T-cell (primary cell): ENCODE measurements at regions of chr15 and their contacts with region 1.

Region 1: GRCh38 chr15:38631126-38632075 is 66.8 kb upstream of the RASGRP1 start:
- DNase-seq: no peak
- ATAC-seq: peak in 3 of 4 experiments; percentile 35 to 67 (median 38)
- H3K4me3 ChIP-seq: no peak overlapping the region
- H3K4me3 Mint-ChIP-seq: peak overlapping the region in 1 of 3 donors; percentile 57
- H3K27ac ChIP-seq: peak overlapping the region; percentile 45
- H3K27ac Mint-ChIP-seq: peak overlapping the region; percentile 80 to 83
- H3K4me1 ChIP-seq: peaks cover 16 to 24% of the 10 kb centered on the region in 2 experiments
- H3K4me1 Mint-ChIP-seq: peaks cover 24 to 34% (median 28%) of the 10 kb centered on the region in 3 donors
- H3K27me3 ChIP-seq: no peaks in the 10 kb centered on the region
- H3K27me3 Mint-ChIP-seq: no peaks in the 10 kb centered on the region

Region 2: GRCh38 chr15:37758412-37758811 is 873.0 kb before region 1 on chr15:
- CTCF ChIA-PET with region 1: no interaction called
- POLR2A ChIA-PET with region 1: no interaction called
- DNase-seq: no peak
- ATAC-seq: no peak
- H3K4me3 ChIP-seq: no peak overlapping the region
- H3K4me3 Mint-ChIP-seq: no peak overlapping the region
- H3K27ac ChIP-seq: no peak overlapping the region
- H3K27ac Mint-ChIP-seq: no peak overlapping the region
- H3K4me1 ChIP-seq: no peaks in the 10 kb centered on the region
- H3K4me1 Mint-ChIP-seq: no peaks in the 10 kb centered on the region
- H3K27me3 ChIP-seq: no peaks in the 10 kb centered on the region
- H3K27me3 Mint-ChIP-seq: peaks cover 2 to 5% of the 10 kb centered on the region in 2 donors

Region 3: DNA sequence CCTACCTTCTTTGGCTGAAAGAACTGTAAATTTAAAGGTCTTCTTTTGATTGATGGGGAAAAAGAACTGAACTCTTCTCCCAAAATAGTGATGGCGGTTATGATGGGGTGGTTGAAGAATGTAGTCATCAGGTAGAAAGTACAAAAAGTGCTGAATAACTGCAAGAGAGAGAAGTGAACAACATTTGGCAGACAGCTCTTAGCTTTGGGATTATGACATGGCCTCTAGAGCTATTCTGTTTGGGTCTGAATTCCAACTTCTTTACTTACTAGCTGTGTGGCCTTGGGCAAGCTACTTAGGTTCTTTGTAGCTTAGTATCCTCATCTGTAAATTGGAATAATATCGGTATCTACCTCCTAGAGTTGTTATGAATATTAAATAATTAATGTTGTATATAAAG is 287.1 kb before region 1 on chr15:
- CTCF ChIA-PET with region 1: no interaction called
- POLR2A ChIA-PET with region 1: interaction called in 1 of 2 experiments, 13 read pairs
- DNase-seq: no peak
- ATAC-seq: no peak
- H3K4me3 ChIP-seq: no peak overlapping the region
- H3K4me3 Mint-ChIP-seq: no peak overlapping the region
- H3K27ac ChIP-seq: no peak overlapping the region
- H3K27ac Mint-ChIP-seq: no peak overlapping the region
- H3K4me1 ChIP-seq: no peaks in the 10 kb centered on the region
- H3K4me1 Mint-ChIP-seq: no peaks in the 10 kb centered on the region
- H3K27me3 ChIP-seq: no peaks in the 10 kb centered on the region
- H3K27me3 Mint-ChIP-seq: peaks cover 8 to 13% of the 10 kb centered on the region in 2 donors

Region 4: DNA sequence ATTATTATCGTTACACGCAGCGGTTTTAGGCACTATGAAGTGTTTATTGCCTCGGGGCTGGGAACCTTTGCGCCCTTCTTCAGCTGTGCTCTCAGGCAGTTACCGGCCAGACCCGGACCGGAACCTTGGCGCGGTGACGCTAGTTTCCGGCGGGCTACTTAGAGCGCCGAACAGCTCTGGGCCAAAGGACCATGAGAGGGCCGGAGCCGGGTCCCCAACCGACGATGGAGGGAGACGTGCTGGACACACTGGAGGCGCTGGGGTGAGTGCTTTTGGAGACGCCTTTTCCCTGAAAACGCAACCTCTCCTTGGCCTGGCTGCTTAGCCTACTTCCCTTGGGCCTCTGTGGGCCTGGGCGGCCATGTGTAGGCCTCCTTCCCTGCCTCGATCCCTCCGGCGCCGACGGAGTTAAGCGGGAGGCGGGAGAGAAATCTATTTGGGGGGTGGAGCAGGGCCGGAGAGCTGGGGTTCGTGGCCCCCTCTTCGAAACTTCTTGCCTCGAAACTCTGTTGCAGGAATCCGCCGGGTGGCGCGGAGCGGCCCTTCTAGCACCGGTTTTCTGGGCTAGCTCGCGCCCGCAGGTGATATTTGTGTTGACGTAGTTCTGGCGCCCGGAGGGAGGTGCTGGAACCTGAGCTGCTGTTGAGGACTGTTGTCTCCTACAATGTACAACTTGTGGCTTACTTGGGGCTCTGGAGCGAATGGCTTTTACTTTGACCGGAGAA is 177.3 kb before region 1 on chr15 and contains the start of gene FAM98B:
- CTCF ChIA-PET with region 1: no interaction called
- POLR2A ChIA-PET with region 1: no interaction called
- DNase-seq: peak; percentile 69 to 92 (median 79)
- ATAC-seq: peak; percentile 85 to 91 (median 88)
- H3K4me3 ChIP-seq: peak within 1 kb of the TSS; percentile 88 to 93
- H3K4me3 Mint-ChIP-seq: peak within 1 kb of the TSS; percentile 95 to 98 (median 96)
- H3K27ac ChIP-seq: peak within 1 kb of the TSS; percentile 88
- H3K27ac Mint-ChIP-seq: peak within 1 kb of the TSS; percentile 93 to 94
- H3K4me1 ChIP-seq: peaks cover 5 to 8% of the 10 kb centered on the region in 2 experiments
- H3K4me1 Mint-ChIP-seq: peaks cover 39 to 44% (median 42%) of the 10 kb centered on the region in 3 donors
- H3K27me3 ChIP-seq: no peaks in the 10 kb centered on the region
- H3K27me3 Mint-ChIP-seq: no peaks in the 10 kb centered on the region
- total RNA-seq, gene FAM98B: 15.1 to 24.4 (median 20.6) TPM

Region 5: DNA sequence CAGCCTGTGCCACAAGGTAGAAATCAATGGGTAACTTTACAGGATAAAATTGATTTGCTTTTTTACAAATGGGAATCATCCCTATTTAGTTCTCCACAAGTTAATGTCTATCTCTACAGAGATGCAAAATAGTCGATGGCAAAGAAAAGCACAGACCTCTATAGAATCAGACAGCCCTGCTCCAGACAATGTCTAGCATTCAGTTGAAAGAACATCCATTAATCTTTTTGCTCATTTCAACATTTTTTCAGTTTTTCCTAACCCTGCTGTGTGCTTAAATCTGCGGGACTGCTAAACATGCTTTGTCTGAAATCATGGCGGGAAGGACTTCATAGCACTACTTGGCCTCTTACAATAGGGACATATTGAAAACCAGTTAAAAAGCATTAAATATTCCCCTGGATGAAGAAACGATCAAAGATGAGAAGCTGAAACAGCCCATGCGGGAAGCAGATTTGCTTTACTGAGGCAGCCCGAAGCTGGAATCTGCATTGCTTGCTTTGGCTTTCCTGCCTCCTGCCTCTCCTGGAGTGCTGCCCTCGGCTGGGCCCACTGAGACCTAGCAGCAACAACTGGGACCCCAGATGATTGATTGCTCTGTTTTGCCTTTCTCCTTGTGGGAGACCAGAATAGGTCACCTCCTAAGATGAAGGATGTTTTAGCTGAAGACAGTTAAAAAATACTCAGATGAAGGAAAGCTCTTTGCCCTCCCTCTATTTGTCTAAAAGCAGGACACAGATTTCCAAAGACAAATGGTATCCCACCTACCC is 28.3 kb before region 1 on chr15:
- CTCF ChIA-PET with region 1: no interaction called
- POLR2A ChIA-PET with region 1: no interaction called
- DNase-seq: no peak
- ATAC-seq: no peak
- H3K4me3 ChIP-seq: no peak overlapping the region
- H3K4me3 Mint-ChIP-seq: no peak overlapping the region
- H3K27ac ChIP-seq: no peak overlapping the region
- H3K27ac Mint-ChIP-seq: no peak overlapping the region
- H3K4me1 ChIP-seq: no peaks in the 10 kb centered on the region
- H3K4me1 Mint-ChIP-seq: peaks cover 0 to 11% (median 5%) of the 10 kb centered on the region in 3 donors
- H3K27me3 ChIP-seq: no peaks in the 10 kb centered on the region
- H3K27me3 Mint-ChIP-seq: no peaks in the 10 kb centered on the region

Region 6: DNA sequence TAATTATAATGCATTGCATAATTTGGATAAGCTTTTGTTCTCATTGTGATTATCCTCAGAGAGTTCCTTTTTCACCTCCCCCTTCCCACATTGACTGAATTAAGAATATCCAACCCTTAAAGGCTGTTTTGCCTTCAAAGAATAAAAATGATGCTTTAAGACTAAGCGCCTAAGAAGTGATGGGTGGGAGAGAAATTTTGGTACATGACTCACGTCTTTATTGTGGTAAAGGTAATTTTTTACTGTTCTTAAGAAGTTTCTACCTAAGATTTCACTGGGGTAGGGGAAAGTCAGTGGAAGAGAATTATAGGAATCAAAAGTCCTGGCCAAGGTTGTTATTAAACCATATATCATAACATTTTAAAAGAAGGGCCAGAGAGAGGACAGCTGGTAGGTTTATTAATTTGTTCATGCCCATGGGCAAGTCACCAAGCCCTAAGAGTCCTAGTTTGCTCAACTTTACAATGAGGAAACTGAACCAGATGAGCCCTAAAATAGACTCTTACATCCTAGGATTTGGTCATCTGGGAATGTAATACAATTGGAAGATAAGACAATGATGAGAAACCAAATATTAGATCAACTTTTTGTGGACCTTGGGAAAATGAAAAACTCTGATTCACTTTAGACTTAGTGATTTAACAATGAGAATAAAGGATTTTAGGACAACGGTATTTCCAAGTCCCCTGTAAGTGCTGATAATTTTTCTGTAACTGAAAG is 34.3 kb after region 1 on chr15:
- CTCF ChIA-PET with region 1: no interaction called
- POLR2A ChIA-PET with region 1: no interaction called
- DNase-seq: peak in 1 of 35 experiments; percentile 58
- ATAC-seq: peak; percentile 52 to 66 (median 58)
- H3K4me3 ChIP-seq: no peak overlapping the region
- H3K4me3 Mint-ChIP-seq: peak overlapping the region in 1 of 3 donors; percentile 40
- H3K27ac ChIP-seq: peak overlapping the region; percentile 7
- H3K27ac Mint-ChIP-seq: peak overlapping the region; percentile 77 to 95
- H3K4me1 ChIP-seq: peaks cover 40 to 69% of the 10 kb centered on the region in 2 experiments
- H3K4me1 Mint-ChIP-seq: peaks cover 85 to 90% (median 89%) of the 10 kb centered on the region in 3 donors
- H3K27me3 ChIP-seq: no peaks in the 10 kb centered on the region
- H3K27me3 Mint-ChIP-seq: no peaks in the 10 kb centered on the region